ENCODE measurements at regions of chr7 and their contacts with region 1.

Region 1: GRCh38 chr7:15464667-15465121 is 97.1 kb downstream of the AGMO start:
- DNase-seq: no peak
- H3K4me3 ChIP-seq: no peak overlapping the region
- H3K27ac ChIP-seq: no peak overlapping the region
- H3K4me1 ChIP-seq: no peaks in the 10 kb centered on the region
- H3K27me3 ChIP-seq: no peaks in the 10 kb centered on the region
- CTCF ChIP-seq: no peak

Region 2: GRCh38 chr7:14065286-14065685 is 1399.4 kb before region 1 on chr7:
- CTCF ChIA-PET with region 1: no interaction called
- POLR2A ChIA-PET with region 1: interaction called, 24 read pairs
- intact Hi-C with region 1: no loop called
- DNase-seq: no peak
- H3K4me3 ChIP-seq: no peak overlapping the region
- H3K27ac ChIP-seq: no peak overlapping the region
- H3K4me1 ChIP-seq: no peaks in the 10 kb centered on the region
- H3K27me3 ChIP-seq: no peaks in the 10 kb centered on the region
- CTCF ChIP-seq: no peak

Region 3: DNA sequence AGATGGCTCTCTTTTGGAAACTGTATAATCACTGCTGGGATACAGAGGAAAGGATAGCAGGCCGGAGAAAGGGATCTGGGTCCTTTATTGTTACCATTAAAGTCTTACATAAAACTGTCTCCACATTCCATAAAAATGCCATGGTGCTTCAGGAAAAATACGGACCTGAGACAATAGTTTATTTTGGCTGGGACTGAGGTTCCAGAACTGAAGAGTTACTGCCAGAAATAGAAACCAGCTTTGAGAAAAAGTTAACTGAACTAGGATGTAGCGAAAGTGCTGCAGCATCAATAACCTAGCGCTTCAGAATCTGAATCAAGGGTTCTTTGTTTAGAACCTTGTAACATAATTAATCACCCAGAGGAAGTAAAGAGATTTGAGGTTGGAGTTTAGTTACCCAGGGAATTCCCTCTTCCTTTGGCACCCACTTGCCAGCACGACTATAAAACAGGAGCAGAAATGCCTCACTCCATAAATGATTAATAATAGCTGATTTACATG is 183.8 kb after region 1 on chr7:
- CTCF ChIA-PET with region 1: no interaction called
- POLR2A ChIA-PET with region 1: no interaction called
- intact Hi-C with region 1: no loop called
- DNase-seq: no peak
- H3K4me3 ChIP-seq: no peak overlapping the region
- H3K27ac ChIP-seq: no peak overlapping the region
- H3K4me1 ChIP-seq: no peaks in the 10 kb centered on the region
- H3K27me3 ChIP-seq: no peaks in the 10 kb centered on the region
- CTCF ChIP-seq: no peak

Measured in PC-9 (cell line).